Activated CD4-positive, alpha-beta memory T cell treated with anti-CD3 and anti-CD28 coated beads, Interleukin-2, amount 10 ng/mL, durations not matched to agents 7 days and 5 days (primary cell): ENCODE measurements at regions of chr19 and their contacts with region 1.

Region 1: GRCh38 chr19:3798137-3798536 is 12.0 kb upstream of the MATK start:
- DNase-seq: peak; percentile 66
- H3K4me3 Mint-ChIP-seq: peak overlapping the region; percentile 28
- H3K27ac Mint-ChIP-seq: peak overlapping the region; percentile 68
- H3K4me1 Mint-ChIP-seq: peaks cover 21% of the 10 kb centered on the region
- H3K27me3 Mint-ChIP-seq: peaks cover 6% of the 10 kb centered on the region

Region 2: GRCh38 chr19:3753631-3754410 is 44.3 kb before region 1 on chr19:
- CTCF ChIA-PET with region 1: no interaction called
- POLR2A ChIA-PET with region 1: no interaction called
- DNase-seq: no peak
- H3K4me3 Mint-ChIP-seq: no peak overlapping the region
- H3K27ac Mint-ChIP-seq: no peak overlapping the region
- H3K4me1 Mint-ChIP-seq: peaks cover 14% of the 10 kb centered on the region
- H3K27me3 Mint-ChIP-seq: no peaks in the 10 kb centered on the region

Region 3: GRCh38 chr19:3809881-3810707 is 12.0 kb after region 1 on chr19:
- CTCF ChIA-PET with region 1: interaction called, 19 read pairs
- POLR2A ChIA-PET with region 1: interaction called, 16 read pairs
- DNase-seq: no peak
- H3K4me3 Mint-ChIP-seq: no peak overlapping the region
- H3K27ac Mint-ChIP-seq: no peak overlapping the region
- H3K4me1 Mint-ChIP-seq: peaks cover 48% of the 10 kb centered on the region
- H3K27me3 Mint-ChIP-seq: no peaks in the 10 kb centered on the region